ENCODE measurements at regions of chr15 and their contacts with region 1.

Region 1: GRCh38 chr15:98881526-98882520 is 125.8 kb downstream of the PGPEP1L start:
- DNase-seq: peak; percentile 67
- H3K4me3 ChIP-seq: peak overlapping the region in 1 of 2 experiments; percentile 36; a peak in 1 of 4 replicates
- H3K27ac ChIP-seq: no peak overlapping the region
- H3K4me1 ChIP-seq: peaks cover 3 to 13% of the 10 kb centered on the region in 2 experiments; a peak in 2 of 4 replicates
- H3K27me3 ChIP-seq: no peaks in the 10 kb centered on the region
- CTCF ChIP-seq: peak; percentile 75
- EP300 ChIP-seq: no peak
- RAD21 ChIP-seq: peak; percentile 68

Region 2: GRCh38 chr15:98853611-98854311 is 28.1 kb before region 1 on chr15:
- CTCF ChIA-PET with region 1: interaction called, 32 read pairs
- POLR2A ChIA-PET with region 1: interaction called, 3 read pairs
- DNase-seq: no peak
- H3K4me3 ChIP-seq: peak overlapping the region; percentile 31 to 76; a peak in 3 of 4 replicates
- H3K27ac ChIP-seq: peak overlapping the region; percentile 68 to 86
- H3K4me1 ChIP-seq: peaks cover 46 to 51% of the 10 kb centered on the region in 2 experiments
- H3K27me3 ChIP-seq: no peaks in the 10 kb centered on the region
- CTCF ChIP-seq: no peak
- EP300 ChIP-seq: no peak; a peak in 1 of 4 replicates
- RAD21 ChIP-seq: no peak

Region 3: GRCh38 chr15:98860281-98861041 is 21.4 kb before region 1 on chr15:
- CTCF ChIA-PET with region 1: interaction called, 32 read pairs
- POLR2A ChIA-PET with region 1: interaction called, 3 read pairs
- DNase-seq: no peak
- H3K4me3 ChIP-seq: no peak overlapping the region
- H3K27ac ChIP-seq: peak overlapping the region in 1 of 2 experiments; percentile 58; a peak in 1 of 4 replicates
- H3K4me1 ChIP-seq: peaks cover 23 to 34% of the 10 kb centered on the region in 2 experiments
- H3K27me3 ChIP-seq: no peaks in the 10 kb centered on the region
- CTCF ChIP-seq: no peak
- EP300 ChIP-seq: no peak
- RAD21 ChIP-seq: no peak

Region 4: DNA sequence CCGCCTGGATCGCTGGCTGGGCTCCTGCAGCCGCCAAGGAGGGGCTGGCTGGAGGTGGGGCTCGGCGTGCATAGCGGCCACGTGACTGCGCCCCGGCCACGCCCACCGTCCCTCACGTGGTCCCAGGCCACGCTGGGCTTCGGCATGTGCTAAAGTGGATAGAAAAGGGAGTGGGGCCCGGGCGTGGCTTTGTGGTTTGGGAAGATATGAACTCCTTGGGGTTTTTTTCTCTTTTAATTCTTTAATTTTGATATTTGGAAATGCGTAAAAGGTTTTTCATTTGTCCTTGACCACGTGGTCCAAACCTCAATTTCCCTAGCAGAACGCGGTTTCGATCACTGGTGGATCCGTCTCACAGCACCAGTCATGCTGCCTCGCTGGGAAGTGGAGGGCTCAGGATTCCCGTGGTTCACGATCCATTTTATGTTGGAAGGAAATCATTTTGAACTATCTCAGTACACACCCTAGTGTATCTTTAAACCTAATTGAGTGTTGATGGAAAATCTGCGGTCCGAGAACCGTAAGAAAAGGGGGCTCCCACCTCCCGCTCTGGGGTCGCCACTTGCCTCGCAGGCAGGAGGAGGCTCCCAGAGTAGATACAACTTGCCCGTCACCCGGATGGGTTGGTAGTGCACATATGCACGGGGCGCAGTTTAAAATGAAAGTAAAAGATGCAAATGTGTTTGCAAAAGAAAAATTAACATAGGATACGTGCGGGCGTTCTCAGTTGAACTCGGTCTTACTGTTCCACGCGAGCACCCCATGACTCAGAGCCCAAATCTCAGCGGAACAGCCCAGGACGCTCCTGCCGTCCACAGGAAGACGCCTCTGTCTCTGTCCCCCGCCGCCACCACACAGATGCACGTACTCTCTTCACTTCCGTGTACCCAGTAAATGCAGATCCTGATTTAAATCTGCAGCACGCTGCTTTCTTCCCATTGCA is 16.2 kb before region 1 on chr15:
- CTCF ChIA-PET with region 1: interaction called, 26 read pairs
- POLR2A ChIA-PET with region 1: interaction called, 3 read pairs
- DNase-seq: peak; percentile 84
- H3K4me3 ChIP-seq: peak overlapping the region; percentile 60 to 65
- H3K27ac ChIP-seq: peak overlapping the region; percentile 90 to 91
- H3K4me1 ChIP-seq: peaks cover 3 to 27% of the 10 kb centered on the region in 2 experiments; a peak in 3 of 4 replicates
- H3K27me3 ChIP-seq: no peaks in the 10 kb centered on the region
- CTCF ChIP-seq: no peak
- EP300 ChIP-seq: no peak
- RAD21 ChIP-seq: no peak

Measured in SK-N-SH (cell line).